CD4-positive, alpha-beta T cell (primary cell): ENCODE measurements at regions of chr6 and their contacts with region 1.

Region 1: GRCh38 chr6:99588618-99589289 is 17.9 kb upstream of the PRDM13 start:
- DNase-seq: peak; percentile 41 to 83 (median 58)
- ATAC-seq: peak; percentile 88
- H3K4me3 ChIP-seq: peak overlapping the region; percentile 63
- H3K4me3 Mint-ChIP-seq: peak overlapping the region; percentile 88
- H3K27ac ChIP-seq: no peak overlapping the region
- H3K27ac Mint-ChIP-seq: no peak overlapping the region
- H3K4me1 ChIP-seq: peaks cover 30% of the 10 kb centered on the region
- H3K4me1 Mint-ChIP-seq: peaks cover 34% of the 10 kb centered on the region
- H3K27me3 ChIP-seq: peaks cover 40 to 72% of the 10 kb centered on the region in 2 experiments
- H3K27me3 Mint-ChIP-seq: peaks cover 84% of the 10 kb centered on the region
- CTCF ChIP-seq: peak; percentile 62

Region 2: DNA sequence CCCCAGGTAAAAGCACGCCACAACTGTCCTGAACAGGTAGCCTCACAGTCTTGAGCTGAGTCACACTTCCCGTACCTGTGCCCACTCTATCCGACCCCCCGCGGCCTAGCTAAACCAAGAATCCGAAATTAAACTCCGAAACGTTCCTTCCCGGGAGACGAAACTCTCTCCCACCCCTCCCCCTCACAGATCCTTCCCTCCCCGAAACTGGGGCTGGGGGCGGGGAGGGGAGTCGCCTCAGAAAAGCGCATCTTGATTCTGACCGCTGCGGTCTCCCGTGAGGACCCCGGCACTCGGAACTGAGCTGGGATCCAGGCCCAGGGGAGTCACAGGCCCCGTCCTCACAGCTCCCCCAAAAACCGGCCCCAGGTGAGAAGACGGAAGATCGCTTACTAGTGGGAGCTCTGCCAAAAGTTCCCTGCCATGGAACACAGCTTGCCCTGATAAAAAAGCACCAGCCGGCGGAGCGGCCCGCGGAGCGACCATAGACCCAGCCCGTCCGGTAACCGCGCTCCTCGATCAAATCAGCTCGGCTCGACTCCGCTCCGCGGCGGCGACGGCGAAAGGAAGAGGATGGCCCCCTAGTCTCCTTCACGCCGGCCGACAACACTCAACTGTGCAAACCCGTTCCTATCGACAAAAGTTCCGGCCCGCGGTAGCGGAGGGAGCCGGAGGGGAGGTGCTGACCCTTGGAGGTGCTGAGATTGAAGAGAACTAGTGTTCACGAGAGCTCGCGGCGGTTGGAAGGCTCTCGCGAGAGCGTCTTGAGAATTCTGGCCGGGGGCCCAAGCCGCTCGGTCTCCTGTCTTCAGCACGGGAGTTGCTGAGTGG is 20.4 kb before region 1 on chr6 and contains the start of gene CCNC:
- CTCF ChIA-PET with region 1: interaction called, 5 read pairs
- POLR2A ChIA-PET with region 1: interaction called, 17 read pairs
- intact Hi-C with region 1: no loop called
- DNase-seq: peak; percentile 78 to 94 (median 88)
- ATAC-seq: peak; percentile 90
- H3K4me3 ChIP-seq: peak within 1 kb of the TSS; percentile 88
- H3K4me3 Mint-ChIP-seq: peak within 1 kb of the TSS; percentile 97
- H3K27ac ChIP-seq: peak within 1 kb of the TSS in 1 of 2 donors; percentile 57
- H3K27ac Mint-ChIP-seq: peak within 1 kb of the TSS; percentile 91
- H3K4me1 ChIP-seq: peaks cover 9% of the 10 kb centered on the region
- H3K4me1 Mint-ChIP-seq: peaks cover 47% of the 10 kb centered on the region
- H3K27me3 ChIP-seq: no peaks in the 10 kb centered on the region
- H3K27me3 Mint-ChIP-seq: no peaks in the 10 kb centered on the region
- CTCF ChIP-seq: no peak
- total RNA-seq, gene CCNC: 40.5 to 42.6 TPM

Region 3: GRCh38 chr6:99668036-99668705 is 79.4 kb after region 1 on chr6:
- CTCF ChIA-PET with region 1: no interaction called
- POLR2A ChIA-PET with region 1: no interaction called
- intact Hi-C with region 1: loop called in 1 of 2 experiments (anchors 2 kb)
- DNase-seq: no peak
- ATAC-seq: no peak
- H3K4me3 ChIP-seq: no peak overlapping the region
- H3K4me3 Mint-ChIP-seq: no peak overlapping the region
- H3K27ac ChIP-seq: no peak overlapping the region
- H3K27ac Mint-ChIP-seq: no peak overlapping the region
- H3K4me1 ChIP-seq: no peaks in the 10 kb centered on the region
- H3K4me1 Mint-ChIP-seq: no peaks in the 10 kb centered on the region
- H3K27me3 ChIP-seq: no peaks in the 10 kb centered on the region
- H3K27me3 Mint-ChIP-seq: peaks cover 2% of the 10 kb centered on the region
- CTCF ChIP-seq: no peak

Region 4: DNA sequence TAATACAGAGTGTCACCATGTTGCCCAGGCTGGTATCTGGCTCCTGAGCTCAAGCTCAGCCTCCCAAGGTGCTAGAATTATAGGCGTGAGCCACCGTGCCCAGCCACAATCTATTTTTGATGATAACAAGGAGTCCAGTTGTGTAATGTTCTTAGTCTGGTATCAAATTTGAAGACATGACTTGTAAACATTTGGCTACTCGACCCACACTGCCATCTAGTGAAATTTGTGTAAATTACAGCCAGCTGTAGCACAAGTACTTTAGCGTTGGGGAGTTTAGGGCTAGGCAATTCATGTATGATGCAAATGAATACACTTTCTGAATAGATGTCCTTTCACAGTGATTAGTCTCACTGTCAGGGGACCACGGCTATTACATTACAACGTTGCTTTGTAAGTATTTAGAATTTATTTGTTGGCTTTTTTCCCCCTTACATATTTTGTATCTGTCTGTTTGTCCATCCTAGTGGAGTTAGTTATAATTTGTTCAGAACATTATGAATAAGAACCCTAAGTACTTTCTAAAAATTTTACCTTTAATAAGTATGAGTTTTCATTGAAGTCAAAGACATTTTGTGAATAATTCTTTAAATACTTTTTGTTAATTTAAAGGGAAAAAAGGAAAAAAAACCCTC is 157.6 kb after region 1 on chr6:
- CTCF ChIA-PET with region 1: interaction called, 21 read pairs
- POLR2A ChIA-PET with region 1: interaction called, 4 read pairs
- intact Hi-C with region 1: loop called (anchors 1 to 2 kb)
- DNase-seq: peak in 13 of 14 experiments; percentile 10 to 79 (median 37)
- ATAC-seq: peak; percentile 76
- H3K4me3 ChIP-seq: no peak overlapping the region
- H3K4me3 Mint-ChIP-seq: no peak overlapping the region
- H3K27ac ChIP-seq: no peak overlapping the region
- H3K27ac Mint-ChIP-seq: no peak overlapping the region
- H3K4me1 ChIP-seq: no peaks in the 10 kb centered on the region
- H3K4me1 Mint-ChIP-seq: no peaks in the 10 kb centered on the region
- H3K27me3 ChIP-seq: peaks cover 4 to 12% of the 10 kb centered on the region in 2 experiments
- H3K27me3 Mint-ChIP-seq: peaks cover 59% of the 10 kb centered on the region
- CTCF ChIP-seq: peak; percentile 87

Region 5: DNA sequence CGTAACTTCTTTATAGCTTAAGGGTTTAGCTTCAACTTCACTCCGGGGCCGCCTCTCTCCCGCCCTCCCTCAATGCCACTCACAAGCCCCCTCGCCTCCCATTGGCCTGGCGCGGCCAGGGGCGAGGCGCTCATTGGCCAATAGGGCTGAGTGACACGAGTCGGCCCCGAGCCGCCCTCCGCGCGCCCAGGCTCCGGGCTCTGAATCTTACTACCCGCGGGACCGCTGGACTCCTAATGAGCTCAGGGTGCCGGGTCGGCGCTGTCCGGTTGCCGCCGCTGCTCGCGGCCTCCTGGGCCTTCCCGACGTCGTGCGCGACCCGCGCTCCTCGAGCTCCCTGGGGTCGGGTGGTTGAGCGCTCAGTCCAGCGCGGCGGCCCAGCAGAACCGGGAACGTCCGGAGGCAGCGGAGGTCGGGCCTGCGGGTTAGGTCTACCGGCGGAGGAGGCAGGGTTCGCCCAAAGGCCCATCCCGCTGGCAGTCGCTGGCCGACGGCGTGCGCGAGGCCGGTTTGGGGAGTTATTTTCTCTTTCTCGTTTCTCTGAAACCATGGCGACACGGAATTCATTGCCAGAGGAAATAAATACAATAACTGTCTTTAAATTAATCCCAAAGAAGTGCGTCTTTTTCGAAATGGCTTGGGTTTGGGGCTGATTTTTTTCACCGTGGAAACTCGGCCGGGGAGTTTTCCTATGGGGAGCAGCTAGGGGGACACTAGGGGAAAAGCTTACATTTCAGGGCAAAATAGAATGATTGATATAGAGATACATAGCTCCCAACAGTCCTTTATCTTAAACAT is 876.3 kb after region 1 on chr6 and contains the start of gene SIM1:
- CTCF ChIA-PET with region 1: interaction called, 3 read pairs
- POLR2A ChIA-PET with region 1: no interaction called
- intact Hi-C with region 1: loop called in 1 of 2 experiments (anchors 10 kb)
- DNase-seq: no peak
- ATAC-seq: no peak
- H3K4me3 ChIP-seq: no peak within 1 kb of the TSS
- H3K4me3 Mint-ChIP-seq: peak within 1 kb of the TSS; percentile 23
- H3K27ac ChIP-seq: no peak within 1 kb of the TSS
- H3K27ac Mint-ChIP-seq: no peak within 1 kb of the TSS
- H3K4me1 ChIP-seq: peaks cover 39% of the 10 kb centered on the region
- H3K4me1 Mint-ChIP-seq: peaks cover 34% of the 10 kb centered on the region
- H3K27me3 ChIP-seq: peaks cover 97 to 98% of the 10 kb centered on the region in 2 experiments
- H3K27me3 Mint-ChIP-seq: peaks cover 98% of the 10 kb centered on the region
- CTCF ChIP-seq: no peak
- total RNA-seq, gene SIM1: not detected